CD4-positive, alpha-beta memory T cell (primary cell): ENCODE measurements at regions of chr5 and their contacts with region 1.

Region 1: GRCh38 chr5:41924872-41925554 is at the start of gene FBXO4:
- DNase-seq: peak; percentile 89 to 93 (median 91)
- H3K4me3 ChIP-seq: peak within 1 kb of the TSS; percentile 83 to 95
- H3K4me3 Mint-ChIP-seq: peak within 1 kb of the TSS; percentile 81 to 91 (median 89)
- H3K27ac ChIP-seq: peak within 1 kb of the TSS; percentile 93
- H3K27ac Mint-ChIP-seq: peak within 1 kb of the TSS; percentile 81 to 100 (median 98)
- H3K4me1 ChIP-seq: peaks cover 25% of the 10 kb centered on the region
- H3K4me1 Mint-ChIP-seq: peaks cover 10 to 33% (median 22%) of the 10 kb centered on the region in 4 donors
- H3K27me3 ChIP-seq: no peaks in the 10 kb centered on the region
- H3K27me3 Mint-ChIP-seq: no peaks in the 10 kb centered on the region
- total RNA-seq, gene FBXO4: 15.1 to 18.2 TPM

Region 2: GRCh38 chr5:41869739-41870626 is 55.0 kb before region 1 on chr5 and contains the start of gene OXCT1:
- CTCF ChIA-PET with region 1: interaction called, 8 read pairs
- POLR2A ChIA-PET with region 1: interaction called, 28 read pairs
- intact Hi-C with region 1: loop called (anchors 1 kb)
- DNase-seq: peak; percentile 91 to 96 (median 96)
- H3K4me3 ChIP-seq: peak within 1 kb of the TSS; percentile 74 to 81
- H3K4me3 Mint-ChIP-seq: peak within 1 kb of the TSS; percentile 85 to 96 (median 91)
- H3K27ac ChIP-seq: peak within 1 kb of the TSS; percentile 93
- H3K27ac Mint-ChIP-seq: peak within 1 kb of the TSS; percentile 94 to 99 (median 97)
- H3K4me1 ChIP-seq: peaks cover 55% of the 10 kb centered on the region
- H3K4me1 Mint-ChIP-seq: peaks cover 37 to 70% (median 46%) of the 10 kb centered on the region in 4 donors
- H3K27me3 ChIP-seq: no peaks in the 10 kb centered on the region
- H3K27me3 Mint-ChIP-seq: no peaks in the 10 kb centered on the region
- total RNA-seq, gene OXCT1: 34.1 to 37.5 TPM

Region 3: GRCh38 chr5:42057254-42057690 is 132.3 kb after region 1 on chr5:
- CTCF ChIA-PET with region 1: interaction called, 4 read pairs
- POLR2A ChIA-PET with region 1: no interaction called
- intact Hi-C with region 1: loop called (anchors 10 kb)
- DNase-seq: peak; percentile 51 to 57 (median 54)
- H3K4me3 ChIP-seq: no peak overlapping the region
- H3K4me3 Mint-ChIP-seq: no peak overlapping the region
- H3K27ac ChIP-seq: no peak overlapping the region
- H3K27ac Mint-ChIP-seq: no peak overlapping the region
- H3K4me1 ChIP-seq: no peaks in the 10 kb centered on the region
- H3K4me1 Mint-ChIP-seq: no peaks in the 10 kb centered on the region
- H3K27me3 ChIP-seq: no peaks in the 10 kb centered on the region
- H3K27me3 Mint-ChIP-seq: peaks cover 4 to 9% of the 10 kb centered on the region in 2 donors